Dorsolateral prefrontal cortex (tissue), 120 donors: ENCODE measurements at regions of chr11 and their contacts with region 1.

Region 1: DNA sequence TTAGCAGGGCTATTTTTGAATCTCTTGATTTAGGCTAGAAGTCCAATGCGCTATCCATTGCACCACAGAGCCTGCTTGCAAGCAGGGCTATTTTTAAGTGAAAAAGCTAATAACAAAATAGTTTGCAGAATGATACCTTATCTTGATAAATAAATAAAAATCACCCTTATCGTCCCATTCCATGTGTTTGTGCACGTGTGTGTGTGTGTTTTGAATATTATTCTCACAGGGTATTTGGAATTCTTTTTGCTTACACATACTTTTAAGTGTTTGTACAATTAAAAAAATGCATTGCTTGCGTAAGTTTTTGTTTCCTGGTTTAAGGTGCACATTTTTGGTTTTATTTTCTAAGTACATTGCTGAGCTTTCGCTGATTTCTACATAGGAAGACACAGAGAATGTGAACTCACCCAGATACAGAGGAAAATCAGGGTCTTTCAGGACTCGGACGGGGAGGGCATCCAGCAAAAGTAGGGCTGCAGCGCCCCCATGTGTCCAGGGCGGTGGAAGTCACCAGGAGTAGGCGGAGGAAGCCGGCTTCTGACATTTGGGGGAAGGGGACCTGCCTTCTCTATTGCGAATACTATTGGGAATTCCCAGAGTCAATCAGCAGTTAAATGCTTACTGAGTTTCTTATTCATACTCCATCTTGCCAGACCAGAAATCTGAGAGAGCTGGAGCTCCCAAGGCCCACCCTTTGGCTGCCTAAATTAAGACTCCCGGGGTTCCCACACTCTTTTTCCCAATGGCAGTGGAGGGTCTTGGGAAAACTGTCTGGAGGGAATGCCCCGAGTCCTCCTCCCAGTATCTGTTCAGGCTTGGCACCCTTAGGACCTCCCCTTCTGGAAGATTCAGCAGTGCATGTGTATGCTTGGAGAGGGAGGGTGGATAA is 27.2 kb downstream of the SLC1A2 start:
- DNase-seq: peak; percentile 63 to 85 (median 73)
- H3K4me3 ChIP-seq: peak overlapping the region in 9 of 59 donors; percentile 2 to 42 (median 12)
- H3K27ac ChIP-seq: peak overlapping the region in 23 of 59 donors; percentile 6 to 68 (median 38)
- H3K27me3 ChIP-seq: no peaks in the 10 kb centered on the region
- CTCF ChIP-seq: peak; percentile 72 to 95 (median 86)

Region 2: GRCh38 chr11:34585735-34586487 is 806.3 kb before region 1 on chr11:
- intact Hi-C with region 1: loop called in 1 of 2 experiments (anchors 5 kb)
- DNase-seq: no peak
- H3K4me3 ChIP-seq: peak overlapping the region in 35 of 59 donors; percentile 3 to 54 (median 24)
- H3K27ac ChIP-seq: peak overlapping the region in 35 of 59 donors; percentile 1 to 72 (median 37)
- H3K27me3 ChIP-seq: no peaks in the 10 kb centered on the region
- CTCF ChIP-seq: peak; percentile 65 to 95 (median 84)

Region 3: DNA sequence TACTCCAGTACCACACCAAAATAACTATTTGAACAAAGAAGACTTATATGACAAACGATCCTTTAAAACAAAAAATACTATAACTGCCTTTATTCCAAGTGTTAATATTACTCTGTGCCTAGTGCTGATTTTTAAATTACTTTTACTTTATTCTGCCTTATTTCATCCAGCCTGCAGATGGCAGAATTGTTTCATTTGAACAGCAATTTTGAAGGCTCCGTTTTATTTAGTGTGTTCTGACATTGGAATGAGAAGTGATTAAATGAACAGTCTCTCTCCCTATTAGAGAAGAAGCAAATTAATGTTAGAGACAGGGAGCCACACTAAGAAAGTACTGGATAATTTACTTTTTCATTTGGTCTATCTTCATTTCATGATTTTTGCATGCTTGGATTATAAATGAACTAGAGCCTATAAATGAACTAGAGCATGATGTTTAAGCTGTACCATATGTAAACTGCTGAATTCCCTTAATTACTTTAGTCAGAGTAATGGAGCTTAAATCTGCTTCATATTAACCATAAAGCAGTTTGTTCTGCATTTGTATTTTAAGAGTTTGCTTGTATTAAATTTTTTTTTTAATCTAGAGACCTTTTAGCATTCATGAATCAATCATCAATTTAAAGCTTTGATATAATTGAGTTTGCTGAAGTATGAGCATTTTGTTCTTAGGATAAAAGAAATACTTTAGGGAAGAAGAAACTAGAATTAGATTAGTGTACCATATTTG is 465.9 kb before region 1 on chr11:
- intact Hi-C with region 1: loop called (anchors 2 to 5 kb)
- DNase-seq: no peak
- H3K4me3 ChIP-seq: no peak overlapping the region
- H3K27ac ChIP-seq: no peak overlapping the region
- H3K27me3 ChIP-seq: no peaks in the 10 kb centered on the region
- CTCF ChIP-seq: peak; percentile 64 to 96 (median 80)

Region 4: GRCh38 chr11:34977089-34977906 is 414.9 kb before region 1 on chr11:
- intact Hi-C with region 1: no loop called
- DNase-seq: no peak
- H3K4me3 ChIP-seq: no peak overlapping the region
- H3K27ac ChIP-seq: no peak overlapping the region
- H3K27me3 ChIP-seq: no peaks in the 10 kb centered on the region
- CTCF ChIP-seq: no peak

Region 5: DNA sequence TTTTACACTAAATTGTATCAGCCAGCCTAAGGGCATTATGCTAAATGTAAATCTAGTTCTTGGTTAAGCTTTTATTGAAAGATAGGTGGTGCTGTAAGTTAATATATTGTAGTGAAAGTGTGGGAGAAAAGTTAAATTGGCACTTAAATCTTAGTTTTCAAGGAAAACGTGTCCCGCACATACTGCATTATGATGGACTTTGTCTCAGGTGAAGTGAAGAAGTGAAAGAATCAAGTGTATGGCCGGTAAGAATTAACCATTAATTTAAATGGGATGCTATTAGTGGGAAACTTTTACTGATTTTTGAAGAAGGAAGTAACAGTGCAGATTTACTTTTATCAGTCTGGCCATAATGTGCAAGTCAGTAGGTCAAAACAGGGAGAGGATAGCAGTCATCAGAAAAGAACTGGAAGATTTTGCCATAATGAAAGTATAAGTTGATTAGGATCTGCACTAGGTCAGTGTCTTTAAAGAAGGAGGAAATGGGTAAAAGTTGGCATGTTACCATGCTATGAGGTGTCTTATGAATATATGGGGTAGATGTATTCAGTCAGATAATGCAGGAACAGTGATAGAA is 394.1 kb before region 1 on chr11:
- intact Hi-C with region 1: loop called in 1 of 2 experiments (anchors 5 kb)
- DNase-seq: no peak
- H3K4me3 ChIP-seq: no peak overlapping the region
- H3K27ac ChIP-seq: no peak overlapping the region
- H3K27me3 ChIP-seq: no peaks in the 10 kb centered on the region
- CTCF ChIP-seq: peak in 54 of 56 donors; percentile 22 to 77 (median 48)

Region 6: GRCh38 chr11:35237860-35238715 is 154.1 kb before region 1 on chr11:
- intact Hi-C with region 1: loop called in 1 of 2 experiments (anchors 5 kb)
- DNase-seq: peak in 3 of 10 donors; percentile 14 to 31 (median 27)
- H3K4me3 ChIP-seq: peak overlapping the region in 1 of 59 donors; percentile 9
- H3K27ac ChIP-seq: no peak overlapping the region
- H3K27me3 ChIP-seq: no peaks in the 10 kb centered on the region
- CTCF ChIP-seq: peak; percentile 42 to 88 (median 76)

Region 7: DNA sequence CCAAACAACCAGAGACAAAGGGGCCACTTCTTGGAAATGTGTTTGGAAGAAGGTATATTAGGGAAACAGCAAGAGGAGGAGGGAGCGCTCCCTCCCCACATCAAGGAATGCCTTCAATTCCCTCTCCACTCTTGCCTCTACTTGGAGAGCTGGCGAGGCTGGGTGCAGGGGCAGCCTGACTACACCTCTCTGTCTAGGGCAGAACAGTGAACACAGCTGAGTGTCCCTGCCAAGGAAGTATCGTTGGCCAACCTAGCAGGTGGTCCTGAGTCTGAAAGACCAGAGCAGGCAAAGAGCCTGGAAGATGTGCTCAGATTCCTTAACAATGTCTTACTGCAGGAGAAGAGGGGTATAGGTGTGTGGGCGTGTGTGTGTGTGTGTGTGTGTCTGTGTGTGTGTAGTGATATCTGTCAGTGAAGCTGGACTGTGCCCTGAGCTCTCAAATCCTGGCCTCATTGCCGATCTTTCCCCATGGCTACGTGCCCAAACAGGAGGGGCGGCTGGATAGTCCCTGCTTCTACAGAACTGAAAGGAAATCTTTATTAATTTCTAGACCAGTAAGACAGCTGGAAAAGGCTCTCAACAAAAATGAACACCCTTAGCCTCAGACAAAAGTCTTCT is 86.4 kb after region 1 on chr11:
- intact Hi-C with region 1: no loop called
- DNase-seq: peak in 8 of 10 donors; percentile 8 to 77 (median 52)
- H3K4me3 ChIP-seq: peak overlapping the region in 4 of 59 donors; percentile 25 to 32 (median 26)
- H3K27ac ChIP-seq: peak overlapping the region in 34 of 59 donors; percentile 10 to 81 (median 60)
- H3K27me3 ChIP-seq: peaks cover 0 to 6% (median 0%) of the 10 kb centered on the region in 45 donors
- CTCF ChIP-seq: no peak